Caco-2 (cell line): ENCODE measurements at regions of chr17 and their contacts with region 1.

Region 1: GRCh38 chr17:55238179-55238930 is 26.4 kb upstream of the HLF start:
- DNase-seq: peak; percentile 97
- H3K4me3 ChIP-seq: peak overlapping the region; percentile 47
- H3K4me3 Mint-ChIP-seq: peak overlapping the region; percentile 81
- H3K27ac Mint-ChIP-seq: peak overlapping the region; percentile 73
- H3K4me1 ChIP-seq: no peaks in the 10 kb centered on the region
- H3K4me1 Mint-ChIP-seq: peaks cover 16% of the 10 kb centered on the region
- H3K27me3 ChIP-seq: no peaks in the 10 kb centered on the region
- H3K27me3 Mint-ChIP-seq: no peaks in the 10 kb centered on the region
- CTCF ChIP-seq: peak in 1 of 2 experiments; percentile 10

Region 2: DNA sequence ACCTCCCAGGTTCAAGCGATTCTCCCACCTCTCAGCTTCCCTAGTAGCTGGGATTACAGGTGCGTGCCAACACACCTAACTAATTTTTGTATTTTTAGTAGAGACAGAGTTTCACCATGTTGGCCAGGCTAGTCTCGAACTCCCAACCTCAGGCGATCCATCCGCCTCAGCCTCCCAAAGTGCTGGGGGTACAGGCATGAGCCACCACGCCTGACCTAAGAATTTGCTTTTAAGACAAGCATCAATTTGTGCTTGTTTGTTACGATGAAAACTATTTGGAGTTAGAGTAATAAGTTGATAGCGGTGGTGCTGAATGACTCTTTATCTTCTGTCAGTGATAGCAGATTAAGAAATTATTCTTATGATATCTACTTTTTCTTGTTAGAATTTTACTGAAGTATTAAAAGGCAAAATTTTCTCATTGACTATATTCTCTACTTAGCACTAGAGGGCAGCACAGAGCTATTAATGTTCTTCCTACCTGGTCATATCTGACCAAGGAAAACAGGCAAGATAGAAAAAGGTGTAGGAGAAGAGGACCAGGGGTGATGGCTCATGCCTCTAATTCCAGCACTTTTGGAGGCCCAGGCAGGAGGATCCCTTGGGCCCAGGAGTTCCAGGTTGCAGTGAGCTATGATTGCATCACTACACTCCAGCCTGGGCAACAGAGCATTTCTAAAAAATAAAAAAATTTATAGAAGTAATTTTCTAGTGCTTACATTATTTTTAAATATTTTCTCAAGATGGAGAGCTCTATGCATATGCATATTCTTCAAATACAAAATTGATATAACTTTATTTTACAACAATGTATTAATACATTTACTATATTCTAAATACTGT is 245.3 kb before region 1 on chr17:
- CTCF ChIA-PET with region 1: no interaction called
- POLR2A ChIA-PET with region 1: interaction called, 12 read pairs
- intact Hi-C with region 1: loop called (anchors 10 kb)
- DNase-seq: peak in 1 of 2 experiments; percentile 56
- H3K4me3 ChIP-seq: no peak overlapping the region
- H3K4me3 Mint-ChIP-seq: no peak overlapping the region
- H3K27ac Mint-ChIP-seq: no peak overlapping the region
- H3K4me1 ChIP-seq: no peaks in the 10 kb centered on the region
- H3K4me1 Mint-ChIP-seq: no peaks in the 10 kb centered on the region
- H3K27me3 ChIP-seq: no peaks in the 10 kb centered on the region
- H3K27me3 Mint-ChIP-seq: no peaks in the 10 kb centered on the region
- CTCF ChIP-seq: peak; percentile 60 to 64

Region 3: GRCh38 chr17:55117164-55117563 is 121.2 kb before region 1 on chr17:
- CTCF ChIA-PET with region 1: no interaction called
- POLR2A ChIA-PET with region 1: no interaction called
- intact Hi-C with region 1: no loop called
- DNase-seq: no peak
- H3K4me3 ChIP-seq: no peak overlapping the region
- H3K4me3 Mint-ChIP-seq: no peak overlapping the region
- H3K27ac Mint-ChIP-seq: no peak overlapping the region
- H3K4me1 ChIP-seq: no peaks in the 10 kb centered on the region
- H3K4me1 Mint-ChIP-seq: no peaks in the 10 kb centered on the region
- H3K27me3 ChIP-seq: no peaks in the 10 kb centered on the region
- H3K27me3 Mint-ChIP-seq: no peaks in the 10 kb centered on the region
- CTCF ChIP-seq: no peak

Region 4: DNA sequence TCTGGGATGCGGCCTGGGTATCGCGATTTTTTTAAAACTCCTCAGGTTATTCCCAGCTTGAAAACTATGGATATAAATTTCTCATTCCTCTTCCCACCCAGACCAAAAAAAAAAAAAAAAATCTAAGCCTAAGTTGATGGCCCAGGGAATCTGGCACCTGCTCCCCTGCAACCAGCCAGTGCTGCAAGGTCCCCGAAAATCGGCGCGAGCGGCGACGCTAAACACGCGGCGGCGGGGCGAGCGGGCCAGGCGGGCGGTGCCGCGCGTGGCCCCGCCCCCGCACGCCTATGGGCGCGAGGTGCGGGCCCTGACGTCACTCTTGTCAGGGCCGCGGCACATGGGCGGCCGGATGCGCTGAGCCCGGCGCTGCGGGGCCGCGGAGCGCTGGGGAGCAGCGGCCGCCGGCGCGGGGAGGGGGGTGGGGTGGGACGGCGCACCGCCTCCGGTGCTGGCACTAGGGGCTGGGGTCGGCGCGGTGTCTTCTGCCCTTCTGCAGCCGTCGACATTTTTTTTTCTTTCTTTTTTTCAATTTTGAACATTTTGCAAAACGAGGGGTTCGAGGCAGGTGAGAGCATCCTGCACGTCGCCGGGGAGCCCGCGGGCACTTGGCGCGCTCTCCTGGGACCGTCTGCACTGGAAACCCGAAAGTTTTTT is 26.4 kb after region 1 on chr17 and contains the start of gene HLF:
- CTCF ChIA-PET with region 1: interaction called, 14 read pairs
- POLR2A ChIA-PET with region 1: interaction called, 15 read pairs
- intact Hi-C with region 1: loop called (anchors 1 kb)
- DNase-seq: peak; percentile 83 to 91
- H3K4me3 ChIP-seq: peak within 1 kb of the TSS; percentile 66
- H3K4me3 Mint-ChIP-seq: peak within 1 kb of the TSS; percentile 84
- H3K27ac Mint-ChIP-seq: peak within 1 kb of the TSS; percentile 39
- H3K4me1 ChIP-seq: no peaks in the 10 kb centered on the region
- H3K4me1 Mint-ChIP-seq: peaks cover 14% of the 10 kb centered on the region
- H3K27me3 ChIP-seq: no peaks in the 10 kb centered on the region
- H3K27me3 Mint-ChIP-seq: no peaks in the 10 kb centered on the region
- CTCF ChIP-seq: no peak
- total RNA-seq, gene HLF: 17.3 and 19.8 TPM in 2 replicates

Region 5: DNA sequence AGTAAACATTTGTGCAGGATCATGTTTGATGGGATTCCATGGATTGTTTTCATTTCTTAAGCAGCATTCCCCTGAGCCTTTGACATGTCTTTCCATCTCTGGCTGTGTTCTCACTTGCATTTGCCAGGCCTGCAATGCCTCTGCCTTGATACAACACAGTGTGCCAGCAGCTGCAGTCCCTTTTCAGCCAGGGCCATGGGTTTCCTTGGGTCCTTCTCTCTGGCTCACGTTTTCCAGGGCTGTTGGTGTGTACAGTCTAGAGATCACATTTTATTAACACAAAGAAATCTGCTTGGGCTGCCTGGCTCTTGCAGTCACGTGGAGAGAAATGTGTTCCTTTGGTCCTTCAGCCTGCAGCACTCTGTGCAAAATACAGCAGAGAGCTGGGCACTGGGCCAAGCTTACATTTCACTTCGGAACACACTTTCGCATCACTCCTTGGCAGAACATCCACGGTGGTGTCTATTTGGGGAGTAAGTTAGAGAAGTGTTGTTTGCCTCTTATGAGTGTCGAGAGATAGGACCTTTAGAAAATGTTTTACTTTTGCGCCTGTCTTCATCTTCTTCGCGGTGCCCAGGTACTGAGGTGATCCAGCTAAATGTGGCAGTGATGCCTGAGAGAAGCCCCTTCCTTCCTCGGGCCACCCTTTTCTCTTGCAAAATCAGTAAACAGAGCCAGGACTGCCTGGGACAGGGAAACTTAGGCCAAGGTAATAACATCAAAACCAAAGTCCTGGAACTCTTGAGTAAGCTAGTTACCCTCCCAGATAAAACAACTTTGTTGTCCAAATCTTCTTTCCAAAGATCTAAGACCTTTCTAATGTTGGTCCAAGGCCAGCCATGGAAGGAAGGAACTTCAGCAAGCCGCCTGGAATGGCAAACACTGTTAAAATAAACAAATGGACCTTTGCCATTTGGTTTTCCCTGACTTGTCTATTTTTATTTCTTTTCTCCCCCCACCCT is 47.3 kb after region 1 on chr17:
- CTCF ChIA-PET with region 1: interaction called, 7 read pairs
- POLR2A ChIA-PET with region 1: interaction called, 24 read pairs
- intact Hi-C with region 1: loop called (anchors 1 kb)
- DNase-seq: peak; percentile 75 to 79
- H3K4me3 ChIP-seq: no peak overlapping the region
- H3K4me3 Mint-ChIP-seq: peak overlapping the region; percentile 56
- H3K27ac Mint-ChIP-seq: peak overlapping the region; percentile 86
- H3K4me1 ChIP-seq: peaks cover 57% of the 10 kb centered on the region
- H3K4me1 Mint-ChIP-seq: peaks cover 46% of the 10 kb centered on the region
- H3K27me3 ChIP-seq: no peaks in the 10 kb centered on the region
- H3K27me3 Mint-ChIP-seq: no peaks in the 10 kb centered on the region
- CTCF ChIP-seq: no peak

Region 6: DNA sequence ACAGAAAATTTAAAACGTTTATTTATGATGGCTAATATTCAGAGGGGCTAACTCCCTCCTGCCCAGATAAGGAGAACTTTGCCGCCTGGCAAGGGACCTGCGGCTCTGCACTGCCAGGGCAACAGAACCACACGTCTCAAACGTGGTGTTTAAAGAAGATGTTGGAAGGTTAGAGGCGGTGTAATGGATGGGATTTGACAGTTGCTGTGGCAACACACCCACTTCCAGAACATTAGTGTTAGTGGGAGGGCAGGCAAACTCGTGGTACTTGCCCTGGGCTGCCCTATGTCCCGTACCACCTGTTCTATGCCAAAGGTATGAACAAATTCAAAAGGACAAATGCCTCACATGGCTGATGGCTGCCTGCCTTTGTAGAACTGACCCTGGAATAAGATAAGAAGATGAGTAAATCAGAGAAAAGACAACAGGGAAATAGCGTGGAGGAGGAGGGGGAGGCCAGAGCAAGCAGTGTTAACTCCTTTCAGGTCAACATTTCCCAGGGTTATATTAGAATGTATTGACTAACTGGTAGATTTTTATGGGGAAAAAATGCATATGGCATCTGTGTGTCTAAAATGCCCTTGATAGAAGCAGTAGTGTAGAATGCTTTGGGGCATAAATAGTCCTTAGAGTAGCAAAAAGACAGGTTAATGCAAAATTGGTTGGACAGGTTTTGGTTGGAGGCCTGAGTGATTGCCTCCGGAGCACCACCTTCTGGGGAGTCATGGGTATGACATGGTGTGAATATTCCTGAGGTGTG is 57.2 kb after region 1 on chr17:
- CTCF ChIA-PET with region 1: interaction called, 9 read pairs
- POLR2A ChIA-PET with region 1: no interaction called
- intact Hi-C with region 1: loop called (anchors 1 kb)
- DNase-seq: peak; percentile 70 to 84
- H3K4me3 ChIP-seq: no peak overlapping the region
- H3K4me3 Mint-ChIP-seq: peak overlapping the region; percentile 35
- H3K27ac Mint-ChIP-seq: peak overlapping the region; percentile 20
- H3K4me1 ChIP-seq: peaks cover 20% of the 10 kb centered on the region
- H3K4me1 Mint-ChIP-seq: peaks cover 13% of the 10 kb centered on the region
- H3K27me3 ChIP-seq: no peaks in the 10 kb centered on the region
- H3K27me3 Mint-ChIP-seq: no peaks in the 10 kb centered on the region
- CTCF ChIP-seq: peak; percentile 89 to 92